ENCODE measurements at regions of chr5 and their contacts with region 1.

Region 1: DNA sequence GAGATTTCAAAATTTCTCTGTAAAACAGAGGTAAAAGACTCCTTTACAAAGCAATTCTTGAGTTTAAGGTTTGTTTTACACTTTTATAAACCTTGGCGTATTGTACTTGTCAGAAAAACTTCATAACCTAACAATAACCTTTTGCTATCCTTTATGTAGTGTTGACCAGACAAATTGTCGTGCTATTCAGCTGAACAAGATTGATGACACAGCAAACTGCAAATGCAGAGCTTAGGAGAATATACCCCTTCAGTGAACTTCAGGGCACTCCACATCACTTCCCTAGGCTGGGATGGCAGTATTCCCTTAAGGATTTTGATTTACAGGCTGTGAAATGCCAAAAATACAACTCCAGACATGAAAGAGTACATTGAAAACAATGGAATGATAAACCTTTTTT is 89.2 kb upstream of the CDH18 start:
- DNase-seq: no peak
- ATAC-seq: no peak
- H3K4me3 ChIP-seq: no peak overlapping the region
- H3K27ac ChIP-seq: no peak overlapping the region
- H3K4me1 ChIP-seq: no peaks in the 10 kb centered on the region
- H3K27me3 ChIP-seq: no peaks in the 10 kb centered on the region
- CTCF ChIP-seq: no peak

Region 2: DNA sequence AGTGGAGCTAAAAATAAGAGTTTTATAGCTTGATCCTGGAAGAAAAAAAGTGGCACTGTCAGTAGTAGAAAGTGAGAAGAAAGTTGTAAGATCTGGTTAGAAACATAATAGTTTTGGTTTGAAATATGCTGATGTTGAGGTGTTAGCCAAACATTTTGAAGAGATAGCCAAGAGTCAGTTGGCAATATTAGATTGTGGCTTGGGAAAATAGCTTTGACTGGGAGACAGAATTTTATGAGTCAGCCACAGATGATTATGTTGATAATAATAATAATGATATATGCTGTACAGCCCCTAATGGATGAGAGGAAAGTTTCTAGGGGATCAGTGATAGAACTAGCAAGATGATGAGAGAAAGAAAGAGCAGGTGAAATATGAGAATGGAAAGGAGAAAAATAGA is 76.8 kb before region 1 on chr5:
- intact Hi-C with region 1: loop called (anchors 2 kb)
- DNase-seq: no peak
- ATAC-seq: no peak
- H3K4me3 ChIP-seq: no peak overlapping the region
- H3K27ac ChIP-seq: no peak overlapping the region
- H3K4me1 ChIP-seq: no peaks in the 10 kb centered on the region
- H3K27me3 ChIP-seq: no peaks in the 10 kb centered on the region
- CTCF ChIP-seq: no peak

Measured in lower lobe of right lung (tissue), 2 donors.